ENCODE measurements at regions of chr15 and their contacts with region 1.

Region 1: DNA sequence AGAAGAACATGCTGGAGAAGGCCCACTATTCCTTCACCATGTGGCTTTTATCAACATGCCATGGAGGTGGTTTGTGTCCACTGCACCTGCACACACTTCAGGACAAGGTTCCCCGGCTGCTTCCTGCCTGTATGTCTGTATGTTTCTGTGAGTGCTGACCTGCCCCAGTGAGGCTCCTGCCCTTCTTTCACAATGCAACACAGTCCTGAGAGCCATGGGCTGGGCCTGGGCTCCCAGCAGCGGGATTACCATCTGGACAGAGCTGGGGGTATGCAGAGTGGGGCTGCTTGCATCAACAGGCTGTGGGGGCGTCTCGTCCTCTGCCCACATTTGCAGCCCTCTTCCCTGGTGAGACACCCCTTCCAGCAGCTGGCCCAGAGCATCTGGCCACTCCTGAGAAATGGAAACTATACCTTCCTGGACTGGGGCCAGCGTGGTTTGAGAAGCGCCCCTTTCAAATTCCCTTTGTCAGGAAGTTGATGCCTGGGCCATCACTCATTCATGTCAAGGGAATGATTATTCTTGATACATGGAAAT is 29.3 kb upstream of the C15orf39 start:
- DNase-seq: no peak
- H3K4me3 ChIP-seq: no peak overlapping the region
- H3K27ac ChIP-seq: no peak overlapping the region
- H3K4me1 ChIP-seq: peaks cover 7 to 12% of the 10 kb centered on the region in 2 donors
- H3K27me3 ChIP-seq: no peaks in the 10 kb centered on the region
- CTCF ChIP-seq: no peak
- POLR2A ChIP-seq: no peak

Region 2: DNA sequence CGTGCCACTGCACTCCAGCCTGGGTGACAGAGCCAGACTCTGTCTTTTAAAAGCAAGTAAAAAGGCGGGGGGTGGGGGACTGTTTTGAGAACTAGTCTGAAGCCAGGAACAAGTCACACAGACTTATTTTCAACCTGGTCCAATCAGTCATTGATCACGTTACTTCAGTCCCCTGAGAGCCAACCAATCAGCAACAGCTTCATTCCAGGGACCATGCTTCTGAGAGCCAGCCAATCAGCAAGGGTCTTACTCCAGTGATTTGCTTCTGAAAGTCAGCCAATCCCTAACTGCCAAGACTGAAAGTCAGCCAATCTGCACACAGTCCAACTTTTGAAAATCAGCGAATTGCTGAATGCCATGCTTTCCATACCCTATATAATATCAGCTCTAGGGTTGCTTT is 19.3 kb before region 1 on chr15:
- intact Hi-C with region 1: loop called (anchors 2 kb)
- DNase-seq: no peak
- H3K4me3 ChIP-seq: no peak overlapping the region
- H3K27ac ChIP-seq: no peak overlapping the region
- H3K4me1 ChIP-seq: no peaks in the 10 kb centered on the region
- H3K27me3 ChIP-seq: no peaks in the 10 kb centered on the region
- CTCF ChIP-seq: no peak
- POLR2A ChIP-seq: no peak

Measured in breast epithelium (tissue), 4 donors.